Endothelial cell of umbilical vein (primary cell): ENCODE measurements at regions of chr5 and their contacts with region 1.

Region 1: GRCh38 chr5:134904630-134905245 is at the start of gene PCBD2:
- DNase-seq: peak; percentile 90
- H3K4me3 ChIP-seq: peak within 1 kb of the TSS; percentile 66 to 71 (median 69)
- H3K27ac ChIP-seq: peak within 1 kb of the TSS; percentile 85
- H3K4me1 ChIP-seq: no peaks in the 10 kb centered on the region
- H3K27me3 ChIP-seq: no peaks in the 10 kb centered on the region
- CTCF ChIP-seq: peak; percentile 95 to 96
- POLR2A ChIP-seq: peak; percentile 79
- total RNA-seq, gene PCBD2: 10.0 and 10.7 TPM in 2 replicates

Region 2: GRCh38 chr5:134328619-134329018 is 576.1 kb before region 1 on chr5:
- CTCF ChIA-PET with region 1: no interaction called
- POLR2A ChIA-PET with region 1: no interaction called
- dilution Hi-C with region 1: no loop called
- intact Hi-C with region 1: no loop called
- DNase-seq: no peak
- H3K4me3 ChIP-seq: no peak overlapping the region
- H3K27ac ChIP-seq: no peak overlapping the region
- H3K4me1 ChIP-seq: no peaks in the 10 kb centered on the region
- H3K27me3 ChIP-seq: no peaks in the 10 kb centered on the region
- CTCF ChIP-seq: no peak
- POLR2A ChIP-seq: no peak

Region 3: GRCh38 chr5:134758504-134759341 is 146.0 kb before region 1 on chr5 and contains the start of gene DDX46:
- CTCF ChIA-PET with region 1: interaction called, 8 read pairs
- POLR2A ChIA-PET with region 1: no interaction called
- dilution Hi-C with region 1: no loop called
- intact Hi-C with region 1: loop called (anchors 1 kb)
- DNase-seq: peak; percentile 95
- H3K4me3 ChIP-seq: peak within 1 kb of the TSS; percentile 54 to 87 (median 76)
- H3K27ac ChIP-seq: peak within 1 kb of the TSS; percentile 45
- H3K4me1 ChIP-seq: peaks cover 15% of the 10 kb centered on the region
- H3K27me3 ChIP-seq: no peaks in the 10 kb centered on the region
- CTCF ChIP-seq: peak; percentile 84 to 89
- POLR2A ChIP-seq: peak; percentile 94
- total RNA-seq, gene DDX46: 58.0 and 65.2 TPM in 2 replicates

Region 4: DNA sequence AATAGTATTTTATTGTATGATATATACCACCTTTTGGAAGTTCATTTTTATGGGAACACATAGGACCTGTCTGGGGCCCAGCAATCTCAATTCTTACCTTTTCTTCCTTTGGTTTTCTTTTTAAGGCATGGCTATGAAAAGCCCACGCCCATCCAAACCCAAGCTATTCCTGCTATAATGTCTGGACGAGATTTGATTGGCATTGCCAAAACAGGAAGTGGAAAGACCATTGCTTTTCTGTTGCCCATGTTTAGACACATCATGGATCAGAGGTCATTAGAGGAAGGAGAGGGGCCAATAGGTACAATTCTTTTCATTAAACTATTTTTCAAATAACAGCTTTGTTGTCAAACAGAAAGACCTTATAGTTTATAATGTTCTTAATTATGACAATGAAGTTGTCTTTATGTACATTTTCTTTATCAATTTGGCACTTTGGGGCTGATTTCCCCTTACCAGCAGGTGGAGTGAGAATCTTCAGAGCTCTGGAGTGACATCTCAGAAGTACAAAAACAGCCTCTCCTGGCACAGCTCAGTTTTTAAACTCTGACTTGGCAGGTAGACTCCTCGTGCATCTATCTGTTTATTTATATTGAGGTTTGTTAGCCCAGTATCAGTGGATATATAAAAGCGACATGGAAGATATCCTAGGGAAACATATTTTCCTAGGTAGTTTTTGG is 120.4 kb before region 1 on chr5:
- CTCF ChIA-PET with region 1: interaction called, 25 read pairs
- POLR2A ChIA-PET with region 1: no interaction called
- dilution Hi-C with region 1: no loop called
- intact Hi-C with region 1: loop called (anchors 1 kb)
- DNase-seq: peak; percentile 22
- H3K4me3 ChIP-seq: no peak overlapping the region
- H3K27ac ChIP-seq: peak overlapping the region; percentile 33
- H3K4me1 ChIP-seq: peaks cover 3% of the 10 kb centered on the region
- H3K27me3 ChIP-seq: no peaks in the 10 kb centered on the region
- CTCF ChIP-seq: no peak
- POLR2A ChIP-seq: no peak

Region 5: DNA sequence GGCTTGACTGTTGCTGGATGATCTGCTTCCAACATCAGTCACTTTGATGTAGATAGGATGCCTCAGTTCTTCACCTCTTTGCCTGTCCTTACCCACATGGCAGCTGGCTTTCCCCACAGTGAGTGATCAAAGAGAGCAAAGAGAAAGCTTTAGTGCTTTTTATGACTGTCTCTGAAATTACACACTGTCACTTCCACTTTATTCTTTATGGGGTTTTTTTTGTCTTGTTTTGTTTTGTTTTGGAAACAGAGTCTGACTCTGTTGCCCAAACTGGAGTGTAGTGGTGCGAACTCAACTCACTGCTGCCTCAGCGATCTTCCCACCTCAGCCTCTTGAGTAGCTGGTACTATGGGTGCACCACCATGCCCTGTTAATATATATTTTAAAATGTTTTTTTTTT is 91.3 kb before region 1 on chr5:
- CTCF ChIA-PET with region 1: no interaction called
- POLR2A ChIA-PET with region 1: no interaction called
- dilution Hi-C with region 1: no loop called
- intact Hi-C with region 1: no loop called
- DNase-seq: no peak
- H3K4me3 ChIP-seq: no peak overlapping the region
- H3K27ac ChIP-seq: no peak overlapping the region
- H3K4me1 ChIP-seq: no peaks in the 10 kb centered on the region
- H3K27me3 ChIP-seq: no peaks in the 10 kb centered on the region
- CTCF ChIP-seq: no peak
- POLR2A ChIP-seq: no peak

Region 6: GRCh38 chr5:134873987-134874830 is 30.5 kb before region 1 on chr5 and contains the start of gene TXNDC15:
- CTCF ChIA-PET with region 1: interaction called, 5 read pairs
- POLR2A ChIA-PET with region 1: interaction called, 4 read pairs
- dilution Hi-C with region 1: no loop called
- intact Hi-C with region 1: loop called (anchors 1 kb)
- DNase-seq: peak; percentile 89
- H3K4me3 ChIP-seq: peak within 1 kb of the TSS; percentile 54 to 95 (median 80)
- H3K27ac ChIP-seq: peak within 1 kb of the TSS; percentile 60
- H3K4me1 ChIP-seq: peaks cover 3% of the 10 kb centered on the region
- H3K27me3 ChIP-seq: no peaks in the 10 kb centered on the region
- CTCF ChIP-seq: no peak
- POLR2A ChIP-seq: peak; percentile 89
- total RNA-seq, gene TXNDC15: 49.7 and 68.6 TPM in 2 replicates